ENCODE measurements at regions of chr4 and their contacts with region 1.

Region 1: DNA sequence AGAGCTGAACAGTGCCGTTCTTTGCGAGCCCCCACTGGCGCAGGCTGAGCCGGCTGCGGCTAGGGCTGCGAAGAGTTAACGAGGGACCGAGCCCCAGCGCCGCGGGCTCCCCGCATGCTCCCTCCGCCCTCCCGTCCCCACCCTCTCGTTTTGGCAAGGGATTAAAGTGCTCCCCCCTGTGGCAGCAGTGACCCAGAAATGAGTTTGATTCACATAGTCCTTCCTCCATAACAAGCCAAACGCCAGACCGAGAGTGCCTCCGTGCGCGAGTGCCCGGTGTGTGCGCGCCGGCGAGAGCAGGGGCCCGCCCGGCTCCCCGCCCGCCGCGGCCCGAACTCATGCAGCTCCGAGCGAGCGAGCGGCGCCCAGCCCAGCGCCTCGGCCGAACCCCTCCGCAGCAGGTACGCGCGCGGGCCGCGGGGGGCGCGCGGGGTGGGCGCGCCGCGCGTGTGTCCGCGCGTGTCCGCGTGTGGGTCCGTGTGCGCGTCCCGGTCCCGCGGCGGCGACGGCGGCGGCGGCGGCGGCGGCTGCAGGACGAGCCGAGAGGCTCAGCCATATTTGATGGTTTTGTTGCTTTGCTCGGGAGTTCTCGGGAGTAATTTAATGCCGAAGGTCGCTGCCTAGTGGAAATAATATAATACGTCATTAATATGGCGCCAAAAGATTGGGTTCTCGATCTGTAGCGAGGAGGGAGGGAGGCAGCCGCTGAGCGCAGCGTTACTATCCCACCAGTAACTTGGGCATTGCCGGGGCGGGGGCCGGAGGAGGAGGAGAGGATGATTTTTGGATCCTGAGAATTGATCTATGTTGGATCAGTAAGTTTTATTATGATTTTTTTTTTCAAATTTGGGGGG is at the start of gene JADE1:
- DNase-seq: peak; percentile 83
- H3K4me3 Mint-ChIP-seq: peak within 1 kb of the TSS; percentile 99
- H3K27ac Mint-ChIP-seq: peak within 1 kb of the TSS; percentile 100
- H3K4me1 Mint-ChIP-seq: peaks cover 17% of the 10 kb centered on the region
- H3K27me3 Mint-ChIP-seq: no peaks in the 10 kb centered on the region
- total RNA-seq, gene JADE1: 38.7 and 42.4 TPM in 2 replicates

Region 2: GRCh38 chr4:127782274-127783025 is 1027.3 kb before region 1 on chr4 and contains the start of gene HSPA4L:
- intact Hi-C with region 1: loop called (anchors 5 kb)
- DNase-seq: peak; percentile 64
- H3K4me3 Mint-ChIP-seq: peak within 1 kb of the TSS; percentile 91
- H3K27ac Mint-ChIP-seq: peak within 1 kb of the TSS; percentile 97
- H3K4me1 Mint-ChIP-seq: peaks cover 32% of the 10 kb centered on the region
- H3K27me3 Mint-ChIP-seq: peaks cover 65% of the 10 kb centered on the region
- total RNA-seq, gene HSPA4L: 2.5 and 3.8 TPM in 2 replicates

Region 3: GRCh38 chr4:127965062-127965802 is 844.5 kb before region 1 on chr4 and contains the starts of genes ABHD18 and MFSD8:
- intact Hi-C with region 1: loop called (anchors 1 kb)
- DNase-seq: peak; percentile 100
- H3K4me3 Mint-ChIP-seq: peak within 1 kb of the TSS; percentile 90
- H3K27ac Mint-ChIP-seq: peak within 1 kb of the TSS; percentile 96
- H3K4me1 Mint-ChIP-seq: peaks cover 42% of the 10 kb centered on the region
- H3K27me3 Mint-ChIP-seq: no peaks in the 10 kb centered on the region
- total RNA-seq, gene ABHD18: 18.3 and 18.5 TPM in 2 replicates
- total RNA-seq, gene MFSD8: 18.7 and 21.1 TPM in 2 replicates

Region 4: DNA sequence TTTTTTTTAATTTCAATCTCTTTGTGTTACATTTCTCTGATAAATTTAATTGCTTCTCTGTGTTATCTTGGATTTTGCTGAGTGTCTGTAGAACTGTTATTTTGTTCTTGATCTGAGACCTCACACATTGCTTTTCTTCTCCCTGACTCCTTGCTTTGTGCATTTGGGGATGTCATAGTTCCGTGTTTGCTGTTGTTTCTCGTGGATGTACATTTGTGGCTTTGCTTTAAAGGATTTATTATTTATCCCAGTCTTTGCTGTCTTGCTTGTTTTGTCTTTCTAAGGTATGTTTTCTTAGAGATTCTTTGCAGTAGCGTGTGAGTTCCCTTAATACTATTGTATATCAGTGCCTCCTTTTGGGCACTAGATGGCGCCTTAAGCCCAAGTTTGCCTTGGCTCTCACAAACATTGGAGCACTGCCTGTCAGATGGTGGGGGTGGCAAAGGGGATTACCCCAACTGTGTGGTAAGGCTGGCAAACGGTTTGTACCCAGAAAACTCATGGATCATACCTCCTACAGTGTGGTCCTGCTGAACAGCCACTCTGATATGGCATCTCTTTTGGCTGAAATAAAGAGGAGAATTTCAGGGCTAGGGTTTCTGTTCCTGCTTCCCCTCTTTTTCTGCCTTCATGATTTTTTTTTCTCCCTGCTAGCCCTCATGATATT is 618.5 kb before region 1 on chr4:
- intact Hi-C with region 1: loop called (anchors 1 kb)
- DNase-seq: peak; percentile 56
- H3K4me3 Mint-ChIP-seq: no peak overlapping the region
- H3K27ac Mint-ChIP-seq: no peak overlapping the region
- H3K4me1 Mint-ChIP-seq: peaks cover 16% of the 10 kb centered on the region
- H3K27me3 Mint-ChIP-seq: no peaks in the 10 kb centered on the region

Region 5: GRCh38 chr4:128454281-128455075 is 355.2 kb before region 1 on chr4:
- intact Hi-C with region 1: loop called (anchors 2 kb)
- DNase-seq: peak; percentile 20
- H3K4me3 Mint-ChIP-seq: no peak overlapping the region
- H3K27ac Mint-ChIP-seq: no peak overlapping the region
- H3K4me1 Mint-ChIP-seq: peaks cover 4% of the 10 kb centered on the region
- H3K27me3 Mint-ChIP-seq: peaks cover 11% of the 10 kb centered on the region

Region 6: GRCh38 chr4:128574706-128575105 is 235.0 kb before region 1 on chr4:
- intact Hi-C with region 1: loop called (anchors 1 kb)
- DNase-seq: peak; percentile 33
- H3K4me3 Mint-ChIP-seq: no peak overlapping the region
- H3K27ac Mint-ChIP-seq: no peak overlapping the region
- H3K4me1 Mint-ChIP-seq: no peaks in the 10 kb centered on the region
- H3K27me3 Mint-ChIP-seq: peaks cover 5% of the 10 kb centered on the region

Region 7: GRCh38 chr4:128775916-128776315 is 33.8 kb before region 1 on chr4:
- intact Hi-C with region 1: no loop called
- DNase-seq: no peak
- H3K4me3 Mint-ChIP-seq: no peak overlapping the region
- H3K27ac Mint-ChIP-seq: no peak overlapping the region
- H3K4me1 Mint-ChIP-seq: peaks cover 1% of the 10 kb centered on the region
- H3K27me3 Mint-ChIP-seq: no peaks in the 10 kb centered on the region

Region 8: GRCh38 chr4:128863312-128864075 is 53.8 kb after region 1 on chr4:
- intact Hi-C with region 1: loop called (anchors 1 kb)
- DNase-seq: peak; percentile 34
- H3K4me3 Mint-ChIP-seq: peak overlapping the region; percentile 27
- H3K27ac Mint-ChIP-seq: peak overlapping the region; percentile 87
- H3K4me1 Mint-ChIP-seq: peaks cover 53% of the 10 kb centered on the region
- H3K27me3 Mint-ChIP-seq: no peaks in the 10 kb centered on the region

Measured in activated T-helper 1 cell treated with anti-CD3 and anti-CD28 coated beads, Interleukin-12 subunit alpha, Interleukin-12 subunit beta, Interleukin-2, Interleukin-4 antibody, amounts not matched to agents 30 ng/mL and 10 ng/mL and 1 ng/mL, durations not matched to agents 14 hours and 24 hours and 36 hours (primary cell).